Activated T-helper 2 cell treated with anti-CD3 and anti-CD28 coated beads, Interferon-gamma antibody, Interleukin-2, Interleukin-4, amounts not matched to agents 10 μg/mL and 5 μg/mL and 100 μg/mL, durations not matched to agents 14 hours and 24 hours and 36 hours (primary cell): ENCODE measurements at regions of chr2 and their contacts with region 1.

Region 1: DNA sequence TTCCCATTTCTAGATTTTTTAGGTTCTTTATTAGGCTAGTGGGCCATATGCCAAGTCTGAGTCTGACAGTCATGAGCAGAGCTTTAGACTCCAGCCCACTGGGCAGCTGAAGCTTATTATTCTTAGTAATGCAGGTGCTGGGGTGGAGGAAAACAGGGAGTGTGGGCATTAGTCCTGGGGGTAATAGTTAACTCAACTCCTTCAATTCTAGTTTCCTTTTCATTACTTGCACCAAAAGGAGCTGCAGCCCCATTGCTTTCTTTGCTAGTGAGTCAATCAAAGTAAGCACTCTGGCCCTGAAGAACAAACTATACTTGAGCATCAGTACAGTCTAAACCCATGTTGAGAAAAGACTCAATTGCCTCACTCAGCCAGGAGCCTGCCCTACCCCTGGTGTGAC is 35.5 kb downstream of the ICOS start:
- DNase-seq: no peak
- H3K4me3 Mint-ChIP-seq: no peak overlapping the region
- H3K27ac Mint-ChIP-seq: no peak overlapping the region
- H3K4me1 Mint-ChIP-seq: peaks cover 15% of the 10 kb centered on the region
- H3K27me3 Mint-ChIP-seq: peaks cover 26% of the 10 kb centered on the region

Region 2: GRCh38 chr2:203155406-203155805 is 816.7 kb before region 1 on chr2:
- intact Hi-C with region 1: no loop called
- DNase-seq: no peak
- H3K4me3 Mint-ChIP-seq: no peak overlapping the region
- H3K27ac Mint-ChIP-seq: no peak overlapping the region
- H3K4me1 Mint-ChIP-seq: peaks cover 6% of the 10 kb centered on the region
- H3K27me3 Mint-ChIP-seq: no peaks in the 10 kb centered on the region

Region 3: GRCh38 chr2:203301667-203302066 is 670.4 kb before region 1 on chr2:
- intact Hi-C with region 1: no loop called
- DNase-seq: no peak
- H3K4me3 Mint-ChIP-seq: no peak overlapping the region
- H3K27ac Mint-ChIP-seq: no peak overlapping the region
- H3K4me1 Mint-ChIP-seq: no peaks in the 10 kb centered on the region
- H3K27me3 Mint-ChIP-seq: no peaks in the 10 kb centered on the region

Region 4: DNA sequence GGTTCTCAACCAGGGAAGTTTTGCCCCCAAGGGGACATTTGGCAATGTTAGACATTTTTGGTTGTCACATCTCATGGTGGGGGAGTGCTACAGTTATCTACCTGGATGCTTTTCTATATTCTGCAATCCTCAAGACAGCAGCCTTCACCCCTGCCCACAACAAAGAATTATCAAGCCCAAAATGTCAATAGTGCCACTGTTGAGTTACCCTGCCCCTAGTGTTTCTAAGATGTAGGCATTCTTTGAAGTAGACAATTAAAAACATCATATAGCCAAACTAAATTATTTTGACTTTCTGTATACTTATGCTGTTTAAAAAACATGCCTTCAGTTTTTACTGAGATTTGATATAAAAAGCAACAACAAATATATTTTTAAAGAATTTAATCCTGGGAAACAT is 595.9 kb before region 1 on chr2:
- intact Hi-C with region 1: no loop called
- DNase-seq: no peak
- H3K4me3 Mint-ChIP-seq: no peak overlapping the region
- H3K27ac Mint-ChIP-seq: no peak overlapping the region
- H3K4me1 Mint-ChIP-seq: no peaks in the 10 kb centered on the region
- H3K27me3 Mint-ChIP-seq: no peaks in the 10 kb centered on the region

Region 5: GRCh38 chr2:203949228-203949627 is 22.8 kb before region 1 on chr2:
- intact Hi-C with region 1: loop called (anchors 2 kb)
- DNase-seq: no peak
- H3K4me3 Mint-ChIP-seq: peak overlapping the region; percentile 23
- H3K27ac Mint-ChIP-seq: peak overlapping the region; percentile 47
- H3K4me1 Mint-ChIP-seq: peaks cover 81% of the 10 kb centered on the region
- H3K27me3 Mint-ChIP-seq: no peaks in the 10 kb centered on the region

Region 6: DNA sequence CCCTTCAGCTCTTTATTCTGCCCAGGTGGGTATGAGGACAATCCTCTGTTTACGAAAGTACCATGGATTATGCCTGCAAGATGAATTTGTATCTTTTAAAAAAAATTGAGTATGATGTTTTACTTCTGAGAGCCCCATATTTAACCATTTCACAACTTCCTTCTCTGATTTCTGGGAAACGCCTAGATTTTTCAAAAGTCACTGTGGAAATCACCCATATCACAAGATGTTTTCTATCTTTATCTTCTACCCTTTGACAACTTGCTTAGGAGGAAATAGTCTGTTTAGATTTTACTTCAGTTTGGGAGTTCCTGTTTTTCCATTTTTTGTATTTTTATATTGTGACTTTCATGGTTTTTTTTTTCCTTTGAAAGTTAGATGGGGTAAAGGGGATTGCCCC is 17.5 kb after region 1 on chr2:
- intact Hi-C with region 1: loop called (anchors 1 kb)
- DNase-seq: no peak
- H3K4me3 Mint-ChIP-seq: no peak overlapping the region
- H3K27ac Mint-ChIP-seq: peak overlapping the region; percentile 16
- H3K4me1 Mint-ChIP-seq: peaks cover 33% of the 10 kb centered on the region
- H3K27me3 Mint-ChIP-seq: no peaks in the 10 kb centered on the region